B cell (primary cell): ENCODE measurements at regions of chr15 and their contacts with region 1.

Region 1: GRCh38 chr15:65856821-65857455 is 12.4 kb upstream of the RAB11A start:
- DNase-seq: peak; percentile 85
- ATAC-seq: peak; percentile 88
- H3K4me3 ChIP-seq: no peak overlapping the region
- H3K4me3 Mint-ChIP-seq: no peak overlapping the region
- H3K27ac ChIP-seq: no peak overlapping the region
- H3K27ac Mint-ChIP-seq: no peak overlapping the region
- H3K4me1 ChIP-seq: no peaks in the 10 kb centered on the region
- H3K4me1 Mint-ChIP-seq: peaks cover 11% of the 10 kb centered on the region
- H3K27me3 ChIP-seq: no peaks in the 10 kb centered on the region
- H3K27me3 Mint-ChIP-seq: no peaks in the 10 kb centered on the region
- CTCF ChIP-seq: peak; percentile 95

Region 2: GRCh38 chr15:65752151-65752700 is 104.7 kb before region 1 on chr15:
- CTCF ChIA-PET with region 1: interaction called, 4 read pairs
- POLR2A ChIA-PET with region 1: interaction called, 15 read pairs
- intact Hi-C with region 1: no loop called
- DNase-seq: no peak
- ATAC-seq: no peak
- H3K4me3 ChIP-seq: no peak overlapping the region
- H3K4me3 Mint-ChIP-seq: no peak overlapping the region
- H3K27ac ChIP-seq: no peak overlapping the region
- H3K27ac Mint-ChIP-seq: peak overlapping the region; percentile 12
- H3K4me1 ChIP-seq: no peaks in the 10 kb centered on the region
- H3K4me1 Mint-ChIP-seq: peaks cover 23% of the 10 kb centered on the region
- H3K27me3 ChIP-seq: no peaks in the 10 kb centered on the region
- H3K27me3 Mint-ChIP-seq: no peaks in the 10 kb centered on the region
- CTCF ChIP-seq: no peak

Region 3: GRCh38 chr15:66025015-66025452 is 168.1 kb after region 1 on chr15:
- CTCF ChIA-PET with region 1: no interaction called
- POLR2A ChIA-PET with region 1: no interaction called
- intact Hi-C with region 1: no loop called
- DNase-seq: no peak
- ATAC-seq: no peak
- H3K4me3 ChIP-seq: no peak overlapping the region
- H3K4me3 Mint-ChIP-seq: no peak overlapping the region
- H3K27ac ChIP-seq: no peak overlapping the region
- H3K27ac Mint-ChIP-seq: no peak overlapping the region
- H3K4me1 ChIP-seq: no peaks in the 10 kb centered on the region
- H3K4me1 Mint-ChIP-seq: no peaks in the 10 kb centered on the region
- H3K27me3 ChIP-seq: peaks cover 0 to 20% (median 1%) of the 10 kb centered on the region in 4 experiments
- H3K27me3 Mint-ChIP-seq: peaks cover 40% of the 10 kb centered on the region
- CTCF ChIP-seq: no peak